CD8-positive, alpha-beta T cell (primary cell): ENCODE measurements at regions of chr5 and their contacts with region 1.

Region 1: GRCh38 chr5:52743970-52744369 is 43.7 kb upstream of the ITGA1 start:
- DNase-seq: peak in 8 of 9 experiments; percentile 22 to 74 (median 53)
- ATAC-seq: peak; percentile 91
- H3K4me3 ChIP-seq: no peak overlapping the region
- H3K4me3 Mint-ChIP-seq: peak overlapping the region; percentile 9
- H3K27ac ChIP-seq: peak overlapping the region in 1 of 2 experiments; percentile 21
- H3K27ac Mint-ChIP-seq: peak overlapping the region; percentile 90
- H3K4me1 ChIP-seq: peaks cover 43% of the 10 kb centered on the region
- H3K4me1 Mint-ChIP-seq: peaks cover 73% of the 10 kb centered on the region
- H3K27me3 ChIP-seq: no peaks in the 10 kb centered on the region
- H3K27me3 Mint-ChIP-seq: no peaks in the 10 kb centered on the region
- CTCF ChIP-seq: no peak

Region 2: GRCh38 chr5:52709171-52709925 is 34.6 kb before region 1 on chr5:
- CTCF ChIA-PET with region 1: interaction called, 3 read pairs
- POLR2A ChIA-PET with region 1: interaction called, 3 read pairs
- intact Hi-C with region 1: loop called in 1 of 2 experiments (anchors 5 kb)
- DNase-seq: peak in 3 of 9 experiments; percentile 15 to 27 (median 15)
- ATAC-seq: peak; percentile 23
- H3K4me3 ChIP-seq: no peak overlapping the region
- H3K4me3 Mint-ChIP-seq: peak overlapping the region; percentile 16
- H3K27ac ChIP-seq: no peak overlapping the region
- H3K27ac Mint-ChIP-seq: peak overlapping the region; percentile 34
- H3K4me1 ChIP-seq: peaks cover 28% of the 10 kb centered on the region
- H3K4me1 Mint-ChIP-seq: peaks cover 62% of the 10 kb centered on the region
- H3K27me3 ChIP-seq: no peaks in the 10 kb centered on the region
- H3K27me3 Mint-ChIP-seq: no peaks in the 10 kb centered on the region
- CTCF ChIP-seq: no peak

Region 3: DNA sequence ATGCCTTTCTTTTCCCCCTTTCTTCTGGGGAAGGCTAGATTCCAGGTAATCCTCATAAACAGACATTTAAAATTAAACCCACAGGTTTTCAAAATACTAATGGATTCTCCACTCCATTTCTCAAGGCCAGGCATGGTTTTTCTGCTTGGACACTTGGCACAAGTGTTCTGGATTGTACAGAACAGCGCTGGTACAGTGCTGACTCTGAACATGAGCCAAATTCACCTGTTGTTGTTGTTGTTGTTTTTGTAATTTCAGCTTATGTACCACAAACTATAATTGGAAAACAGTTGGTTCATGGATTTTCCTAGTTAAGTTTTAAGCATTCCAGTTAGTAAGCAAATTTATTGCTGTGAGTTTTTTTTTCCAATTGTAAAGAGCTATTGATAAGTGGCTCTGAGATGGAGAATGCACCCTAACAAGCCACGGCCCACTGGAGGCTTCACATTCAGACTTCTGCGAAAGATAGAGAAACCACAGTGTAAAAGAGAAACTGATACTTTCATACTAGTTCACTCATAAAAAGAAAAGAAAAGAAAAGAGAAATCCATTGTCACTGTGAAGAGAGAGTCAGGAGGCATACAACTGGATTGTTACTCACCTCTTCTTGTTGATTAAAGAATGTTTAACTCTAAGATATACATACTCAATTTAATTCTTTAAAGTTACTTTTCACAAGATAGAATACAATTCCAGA is 27.5 kb after region 1 on chr5:
- CTCF ChIA-PET with region 1: no interaction called
- POLR2A ChIA-PET with region 1: interaction called, 5 read pairs
- intact Hi-C with region 1: loop called in 1 of 2 experiments (anchors 2 kb)
- DNase-seq: peak in 5 of 9 experiments; percentile 6 to 57 (median 26)
- ATAC-seq: peak; percentile 45
- H3K4me3 ChIP-seq: no peak overlapping the region
- H3K4me3 Mint-ChIP-seq: peak overlapping the region; percentile 63
- H3K27ac ChIP-seq: no peak overlapping the region
- H3K27ac Mint-ChIP-seq: peak overlapping the region; percentile 87
- H3K4me1 ChIP-seq: peaks cover 24% of the 10 kb centered on the region
- H3K4me1 Mint-ChIP-seq: peaks cover 59% of the 10 kb centered on the region
- H3K27me3 ChIP-seq: no peaks in the 10 kb centered on the region
- H3K27me3 Mint-ChIP-seq: no peaks in the 10 kb centered on the region
- CTCF ChIP-seq: no peak